B cell (primary cell): ENCODE measurements at regions of chr10 and their contacts with region 1.

Region 1: GRCh38 chr10:84537447-84537931 is 209.1 kb downstream of the CCSER2 start:
- DNase-seq: peak; percentile 73
- ATAC-seq: peak; percentile 73
- H3K4me3 ChIP-seq: no peak overlapping the region
- H3K4me3 Mint-ChIP-seq: no peak overlapping the region
- H3K27ac ChIP-seq: no peak overlapping the region
- H3K27ac Mint-ChIP-seq: no peak overlapping the region
- H3K4me1 ChIP-seq: peaks cover 7 to 12% of the 10 kb centered on the region in 2 donors
- H3K4me1 Mint-ChIP-seq: peaks cover 9% of the 10 kb centered on the region
- H3K27me3 ChIP-seq: peaks cover 0 to 22% (median 5%) of the 10 kb centered on the region in 4 experiments
- H3K27me3 Mint-ChIP-seq: peaks cover 35% of the 10 kb centered on the region
- CTCF ChIP-seq: peak; percentile 94

Region 2: DNA sequence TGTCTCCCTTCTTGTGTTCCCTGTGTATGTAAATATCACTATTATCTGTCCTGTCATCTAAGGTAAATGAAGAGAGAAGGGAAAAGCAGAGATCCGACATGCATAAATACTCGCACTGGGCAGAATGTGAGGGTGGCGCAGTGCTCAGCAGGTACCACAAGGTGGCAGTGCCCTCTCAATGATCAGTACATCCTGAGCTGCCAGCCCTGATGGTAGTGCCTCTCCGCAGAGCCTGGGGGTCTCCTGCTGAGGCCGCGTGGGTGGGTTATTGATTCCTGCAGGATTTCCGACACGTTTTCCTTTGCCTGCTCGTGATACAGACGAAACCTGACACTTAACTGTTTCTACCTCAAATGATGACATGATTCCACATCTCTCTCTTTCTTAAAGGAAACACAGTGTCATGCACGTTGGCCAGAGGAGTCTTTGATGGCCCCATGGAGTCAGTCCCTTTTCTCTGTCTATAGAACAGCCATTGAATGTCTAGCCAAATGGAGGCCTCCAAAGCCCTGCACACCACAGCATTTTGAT is 272.8 kb before region 1 on chr10:
- CTCF ChIA-PET with region 1: interaction called, 267 read pairs
- POLR2A ChIA-PET with region 1: no interaction called
- intact Hi-C with region 1: loop called (anchors 1 kb)
- DNase-seq: peak; percentile 73
- ATAC-seq: peak; percentile 91
- H3K4me3 ChIP-seq: no peak overlapping the region
- H3K4me3 Mint-ChIP-seq: no peak overlapping the region
- H3K27ac ChIP-seq: no peak overlapping the region
- H3K27ac Mint-ChIP-seq: no peak overlapping the region
- H3K4me1 ChIP-seq: no peaks in the 10 kb centered on the region
- H3K4me1 Mint-ChIP-seq: no peaks in the 10 kb centered on the region
- H3K27me3 ChIP-seq: peaks cover 0 to 18% (median 4%) of the 10 kb centered on the region in 4 experiments
- H3K27me3 Mint-ChIP-seq: peaks cover 49% of the 10 kb centered on the region
- CTCF ChIP-seq: peak; percentile 96

Region 3: GRCh38 chr10:84352251-84352842 is 185.1 kb before region 1 on chr10:
- CTCF ChIA-PET with region 1: interaction called, 16 read pairs
- POLR2A ChIA-PET with region 1: no interaction called
- intact Hi-C with region 1: loop called (anchors 1 kb)
- DNase-seq: peak; percentile 62
- ATAC-seq: peak; percentile 88
- H3K4me3 ChIP-seq: no peak overlapping the region
- H3K4me3 Mint-ChIP-seq: no peak overlapping the region
- H3K27ac ChIP-seq: no peak overlapping the region
- H3K27ac Mint-ChIP-seq: no peak overlapping the region
- H3K4me1 ChIP-seq: no peaks in the 10 kb centered on the region
- H3K4me1 Mint-ChIP-seq: peaks cover 13% of the 10 kb centered on the region
- H3K27me3 ChIP-seq: no peaks in the 10 kb centered on the region
- H3K27me3 Mint-ChIP-seq: no peaks in the 10 kb centered on the region
- CTCF ChIP-seq: peak; percentile 78

Region 4: DNA sequence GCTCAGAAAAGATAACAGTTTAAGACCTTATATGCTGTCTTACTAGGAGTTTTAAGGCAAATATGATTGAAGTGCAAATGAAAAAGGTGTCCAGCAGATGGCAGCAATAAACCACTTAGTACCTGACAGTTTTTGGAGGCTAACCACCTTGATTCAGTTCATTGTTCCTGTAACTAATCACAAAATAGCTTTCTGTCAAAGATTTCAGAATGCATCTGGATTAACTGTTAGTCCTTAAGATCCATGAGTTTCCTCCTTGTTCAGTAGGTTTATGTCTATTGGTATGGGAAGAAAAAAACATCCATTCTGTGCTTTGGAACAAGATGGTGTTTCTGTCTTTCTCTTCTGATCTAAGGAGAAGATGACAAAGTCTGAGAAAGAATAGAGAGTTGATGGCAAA is 162.5 kb before region 1 on chr10:
- CTCF ChIA-PET with region 1: interaction called, 43 read pairs
- POLR2A ChIA-PET with region 1: no interaction called
- intact Hi-C with region 1: loop called (anchors 1 kb)
- DNase-seq: peak; percentile 64
- ATAC-seq: no peak
- H3K4me3 ChIP-seq: no peak overlapping the region
- H3K4me3 Mint-ChIP-seq: no peak overlapping the region
- H3K27ac ChIP-seq: no peak overlapping the region
- H3K27ac Mint-ChIP-seq: no peak overlapping the region
- H3K4me1 ChIP-seq: no peaks in the 10 kb centered on the region
- H3K4me1 Mint-ChIP-seq: peaks cover 4% of the 10 kb centered on the region
- H3K27me3 ChIP-seq: no peaks in the 10 kb centered on the region
- H3K27me3 Mint-ChIP-seq: no peaks in the 10 kb centered on the region
- CTCF ChIP-seq: peak; percentile 80

Region 5: GRCh38 chr10:84429926-84430520 is 107.5 kb before region 1 on chr10:
- CTCF ChIA-PET with region 1: interaction called, 12 read pairs
- POLR2A ChIA-PET with region 1: no interaction called
- intact Hi-C with region 1: no loop called
- DNase-seq: peak; percentile 55
- ATAC-seq: peak; percentile 58
- H3K4me3 ChIP-seq: no peak overlapping the region
- H3K4me3 Mint-ChIP-seq: no peak overlapping the region
- H3K27ac ChIP-seq: no peak overlapping the region
- H3K27ac Mint-ChIP-seq: no peak overlapping the region
- H3K4me1 ChIP-seq: no peaks in the 10 kb centered on the region
- H3K4me1 Mint-ChIP-seq: peaks cover 6% of the 10 kb centered on the region
- H3K27me3 ChIP-seq: no peaks in the 10 kb centered on the region
- H3K27me3 Mint-ChIP-seq: no peaks in the 10 kb centered on the region
- CTCF ChIP-seq: peak; percentile 81

Region 6: DNA sequence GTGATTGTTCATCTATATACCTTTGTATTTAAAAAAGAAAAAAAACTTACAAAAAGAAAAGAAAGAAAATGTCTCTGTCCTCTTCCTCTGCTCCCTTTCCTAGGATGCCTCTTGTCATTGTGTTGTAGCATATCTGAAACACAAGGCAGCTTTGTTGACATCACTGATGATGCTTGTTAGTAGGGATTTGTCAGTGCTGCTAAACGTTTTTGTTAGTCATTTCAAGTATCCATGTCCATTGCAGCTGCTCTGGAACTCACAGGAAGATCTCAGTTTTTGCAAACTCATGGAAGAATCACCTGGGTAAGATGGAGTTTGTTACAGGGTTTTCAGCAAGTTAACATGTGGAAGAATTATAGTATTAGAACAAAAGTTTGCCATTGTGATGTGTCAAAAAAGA is 85.5 kb before region 1 on chr10:
- CTCF ChIA-PET with region 1: no interaction called
- POLR2A ChIA-PET with region 1: no interaction called
- intact Hi-C with region 1: no loop called
- DNase-seq: no peak
- ATAC-seq: no peak
- H3K4me3 ChIP-seq: no peak overlapping the region
- H3K4me3 Mint-ChIP-seq: no peak overlapping the region
- H3K27ac ChIP-seq: no peak overlapping the region
- H3K27ac Mint-ChIP-seq: no peak overlapping the region
- H3K4me1 ChIP-seq: no peaks in the 10 kb centered on the region
- H3K4me1 Mint-ChIP-seq: no peaks in the 10 kb centered on the region
- H3K27me3 ChIP-seq: no peaks in the 10 kb centered on the region
- H3K27me3 Mint-ChIP-seq: no peaks in the 10 kb centered on the region
- CTCF ChIP-seq: no peak

Region 7: GRCh38 chr10:84548869-84549268 is 11.4 kb after region 1 on chr10:
- CTCF ChIA-PET with region 1: interaction called, 11 read pairs
- POLR2A ChIA-PET with region 1: no interaction called
- intact Hi-C with region 1: no loop called
- DNase-seq: no peak
- ATAC-seq: no peak
- H3K4me3 ChIP-seq: no peak overlapping the region
- H3K4me3 Mint-ChIP-seq: no peak overlapping the region
- H3K27ac ChIP-seq: no peak overlapping the region
- H3K27ac Mint-ChIP-seq: no peak overlapping the region
- H3K4me1 ChIP-seq: no peaks in the 10 kb centered on the region
- H3K4me1 Mint-ChIP-seq: no peaks in the 10 kb centered on the region
- H3K27me3 ChIP-seq: peaks cover 0 to 5% (median 0%) of the 10 kb centered on the region in 4 experiments
- H3K27me3 Mint-ChIP-seq: peaks cover 24% of the 10 kb centered on the region
- CTCF ChIP-seq: no peak

Region 8: GRCh38 chr10:84574102-84574501 is 36.6 kb after region 1 on chr10:
- CTCF ChIA-PET with region 1: no interaction called
- POLR2A ChIA-PET with region 1: no interaction called
- intact Hi-C with region 1: no loop called
- DNase-seq: no peak
- ATAC-seq: no peak
- H3K4me3 ChIP-seq: no peak overlapping the region
- H3K4me3 Mint-ChIP-seq: no peak overlapping the region
- H3K27ac ChIP-seq: no peak overlapping the region
- H3K27ac Mint-ChIP-seq: no peak overlapping the region
- H3K4me1 ChIP-seq: no peaks in the 10 kb centered on the region
- H3K4me1 Mint-ChIP-seq: no peaks in the 10 kb centered on the region
- H3K27me3 ChIP-seq: no peaks in the 10 kb centered on the region
- H3K27me3 Mint-ChIP-seq: peaks cover 16% of the 10 kb centered on the region
- CTCF ChIP-seq: no peak

Region 9: DNA sequence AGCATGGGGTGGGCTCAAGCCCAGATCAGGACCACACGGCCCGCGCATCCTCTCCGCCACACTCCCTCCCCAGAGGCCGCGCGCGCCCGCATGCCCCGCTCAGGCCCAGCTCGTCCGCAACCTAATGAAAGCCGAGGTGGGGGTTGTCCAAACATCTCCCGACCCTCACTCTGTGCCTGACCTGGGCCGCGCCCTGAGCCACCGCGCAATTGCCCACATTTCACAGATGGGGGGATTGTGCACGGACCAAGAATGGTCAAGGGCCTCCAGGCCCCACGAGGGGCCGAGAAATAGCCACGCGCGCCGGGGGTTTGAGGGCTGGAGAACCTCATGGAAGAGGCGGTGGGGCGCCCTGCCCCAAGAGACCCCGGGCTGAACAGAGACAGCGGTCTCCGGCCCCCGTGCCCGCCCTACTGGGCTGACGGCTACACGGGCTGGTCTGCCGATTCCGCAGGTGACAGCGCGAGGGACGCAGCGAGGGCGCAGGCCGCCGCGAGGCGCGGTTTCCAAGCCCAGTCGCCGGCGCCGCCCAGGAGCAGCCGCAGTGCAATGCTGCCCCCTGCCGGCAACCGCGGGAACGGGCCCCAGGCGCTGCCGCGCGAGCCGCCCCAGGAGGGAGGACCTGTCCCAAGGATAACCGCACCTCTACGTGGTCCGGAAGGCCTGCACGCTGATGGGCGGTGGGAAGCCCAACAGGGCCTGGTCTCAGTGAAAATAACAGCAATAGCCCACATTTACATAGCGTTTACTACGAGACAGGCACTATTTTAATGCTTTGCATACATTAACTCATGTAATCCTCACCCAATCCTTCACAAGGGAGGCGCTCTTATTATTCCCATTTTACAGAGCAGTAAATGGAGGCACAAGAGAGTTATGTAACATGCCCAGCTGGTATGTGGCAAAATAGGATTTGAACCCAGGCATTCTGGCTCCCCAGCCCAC is 1839.6 kb after region 1 on chr10:
- CTCF ChIA-PET with region 1: interaction called, 11 read pairs
- POLR2A ChIA-PET with region 1: no interaction called
- intact Hi-C with region 1: no loop called
- DNase-seq: peak; percentile 82
- ATAC-seq: peak; percentile 93
- H3K4me3 ChIP-seq: peak overlapping the region in 2 of 5 experiments; percentile 20 to 24
- H3K4me3 Mint-ChIP-seq: no peak overlapping the region
- H3K27ac ChIP-seq: no peak overlapping the region
- H3K27ac Mint-ChIP-seq: no peak overlapping the region
- H3K4me1 ChIP-seq: peaks cover 5 to 8% of the 10 kb centered on the region in 2 donors
- H3K4me1 Mint-ChIP-seq: peaks cover 2% of the 10 kb centered on the region
- H3K27me3 ChIP-seq: peaks cover 0 to 54% (median 21%) of the 10 kb centered on the region in 4 experiments
- H3K27me3 Mint-ChIP-seq: peaks cover 55% of the 10 kb centered on the region
- CTCF ChIP-seq: peak; percentile 99